Heart right ventricle (tissue), 16 donors: ENCODE measurements at regions of chr10 and their contacts with region 1.

Region 1: DNA sequence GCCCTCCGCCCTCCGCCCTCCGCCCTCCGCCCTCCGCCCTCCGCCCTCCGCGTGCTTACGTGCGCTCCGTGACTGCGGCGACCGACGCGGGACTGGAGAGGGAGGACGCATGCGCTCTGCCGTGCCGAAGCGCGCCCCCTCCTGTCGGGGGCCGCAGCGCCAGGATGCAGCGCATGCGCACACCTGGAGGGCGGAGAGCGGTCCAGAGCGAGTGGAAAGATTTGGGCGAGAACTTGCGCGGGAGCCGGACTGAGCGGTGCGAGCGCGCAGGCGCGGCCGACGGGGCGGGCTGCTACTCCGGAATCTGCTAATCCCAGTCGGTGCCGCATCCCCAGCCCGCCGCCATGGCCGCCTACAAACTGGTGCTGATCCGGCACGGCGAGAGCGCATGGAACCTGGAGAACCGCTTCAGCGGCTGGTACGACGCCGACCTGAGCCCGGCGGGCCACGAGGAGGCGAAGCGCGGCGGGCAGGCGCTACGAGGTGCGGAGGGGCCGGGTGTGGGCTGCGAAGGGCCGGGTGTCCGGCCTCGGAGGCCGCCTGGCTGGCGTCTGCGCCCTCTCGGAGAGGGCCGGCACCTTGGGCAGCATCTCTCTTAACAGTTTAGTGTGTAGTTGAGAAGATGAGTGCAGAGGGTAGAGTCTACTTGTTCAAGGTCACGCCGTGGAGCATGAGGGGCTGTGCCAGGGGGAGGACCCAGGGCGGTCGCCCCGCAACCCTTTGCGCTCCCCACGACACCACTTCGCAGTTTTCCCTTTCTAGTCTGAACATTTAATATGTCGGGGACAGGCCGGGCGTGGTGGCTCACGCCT is at the start of gene PGAM1:
- DNase-seq: peak; percentile 96 to 97
- ATAC-seq: peak; percentile 97 to 99 (median 97)
- H3K4me3 ChIP-seq: peak within 1 kb of the TSS; percentile 59 to 95 (median 86)
- H3K27ac ChIP-seq: peak within 1 kb of the TSS; percentile 79 to 95 (median 92)
- H3K4me1 ChIP-seq: peaks cover 0 to 71% (median 30%) of the 10 kb centered on the region in 9 donors
- H3K27me3 ChIP-seq: no peaks in the 10 kb centered on the region
- CTCF ChIP-seq: peak; percentile 27 to 81 (median 68)
- total RNA-seq, gene PGAM1: 187 to 389 (median 246) TPM

Region 2: DNA sequence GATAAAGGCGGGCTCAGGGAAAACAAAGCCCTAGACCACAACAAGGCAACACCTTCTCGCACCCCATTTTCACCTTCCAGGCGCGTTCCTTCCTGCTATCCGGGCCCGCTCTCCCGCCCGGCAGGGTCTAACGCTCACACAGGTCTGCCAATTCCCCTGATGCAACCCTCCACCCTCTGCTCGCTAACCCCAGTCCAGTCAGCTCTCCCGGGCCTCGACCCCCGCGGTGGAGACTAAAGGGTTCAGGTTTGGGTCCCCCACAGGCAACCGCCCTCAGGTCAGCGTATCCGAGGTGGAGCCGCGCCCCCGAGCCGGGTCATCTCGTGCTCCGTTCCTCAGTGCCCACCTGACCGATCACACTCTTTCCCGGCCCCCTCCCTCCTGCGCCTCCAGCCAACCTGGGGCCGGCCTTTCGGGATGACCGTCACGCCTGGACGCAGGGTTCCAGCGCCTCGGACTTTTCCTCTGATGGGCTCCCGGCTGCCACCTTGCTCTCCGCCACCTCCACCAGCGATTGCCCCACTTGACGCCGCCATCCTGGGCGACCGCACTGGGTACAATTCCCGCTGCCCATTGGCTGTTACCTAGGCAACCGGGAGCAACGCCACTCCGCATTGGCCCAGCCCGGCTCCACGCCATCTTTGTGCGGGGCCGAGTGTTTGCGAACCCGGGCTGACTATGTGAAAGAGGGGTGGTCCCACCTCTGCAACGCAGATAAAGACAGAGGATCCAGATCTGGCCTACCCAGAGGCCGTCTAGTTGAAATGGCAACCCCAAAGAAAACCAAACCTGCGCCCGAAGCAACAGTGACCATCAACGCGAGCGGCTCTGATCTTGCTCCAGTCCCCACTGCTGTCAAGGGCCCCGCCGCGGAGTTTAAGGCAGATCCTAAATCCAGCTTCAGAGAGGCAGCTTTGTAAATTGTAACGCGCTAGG is 207.0 kb after region 1 on chr10 and contains the start of gene MORN4:
- intact Hi-C with region 1: loop called in 1 of 10 experiments (anchors 10 kb)
- DNase-seq: peak; percentile 93 to 96
- ATAC-seq: peak; percentile 98 to 100 (median 100)
- H3K4me3 ChIP-seq: peak within 1 kb of the TSS; percentile 33 to 81 (median 71)
- H3K27ac ChIP-seq: peak within 1 kb of the TSS in 9 of 10 donors; percentile 25 to 77 (median 62)
- H3K4me1 ChIP-seq: peaks cover 0 to 14% (median 9%) of the 10 kb centered on the region in 9 donors
- H3K27me3 ChIP-seq: no peaks in the 10 kb centered on the region
- CTCF ChIP-seq: no peak
- total RNA-seq, gene MORN4: 4.4 to 17.1 (median 12.8) TPM